Transverse colon (tissue), 4 donors: ENCODE measurements at regions of chr6 and their contacts with region 1.

Region 1: GRCh38 chr6:9412951-9413559 is 977.7 kb upstream of the SLC35B3 start:
- DNase-seq: peak; percentile 30
- H3K4me3 ChIP-seq: no peak overlapping the region
- H3K27ac ChIP-seq: no peak overlapping the region
- H3K4me1 ChIP-seq: no peaks in the 10 kb centered on the region
- H3K27me3 ChIP-seq: no peaks in the 10 kb centered on the region
- CTCF ChIP-seq: peak; percentile 20 to 45 (median 44)
- EP300 ChIP-seq: no peak
- POLR2A ChIP-seq: no peak

Region 2: DNA sequence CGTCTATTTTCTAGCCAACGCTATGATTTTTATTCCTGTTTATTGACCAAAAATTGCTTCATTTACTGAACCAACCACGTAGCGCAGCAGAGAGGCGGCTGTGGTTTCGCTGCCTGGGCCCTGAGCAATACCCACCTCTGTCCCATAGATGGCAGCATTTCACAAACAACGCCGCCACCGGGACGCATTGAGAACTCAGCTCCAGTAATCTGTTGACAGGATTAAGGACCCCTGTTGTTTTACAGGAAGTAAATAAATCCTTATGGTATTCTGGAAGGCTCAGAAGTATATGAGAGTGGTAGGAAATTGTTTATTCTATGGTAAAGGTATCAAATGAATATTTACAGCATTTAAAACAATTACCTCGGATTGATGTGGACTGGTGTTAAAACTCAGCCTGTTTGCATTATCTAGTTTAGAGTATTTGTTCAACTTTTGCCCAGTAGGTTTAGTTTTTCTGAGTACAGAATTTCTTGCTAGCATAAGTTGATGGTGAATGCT is 429.8 kb before region 1 on chr6:
- in situ Hi-C with region 1: loop called in 1 of 4 experiments (anchors 25 kb)
- intact Hi-C with region 1: no loop called
- DNase-seq: peak; percentile 63
- H3K4me3 ChIP-seq: peak overlapping the region in 1 of 4 donors; percentile 4
- H3K27ac ChIP-seq: no peak overlapping the region
- H3K4me1 ChIP-seq: peaks cover 0 to 8% (median 2%) of the 10 kb centered on the region in 4 donors
- H3K27me3 ChIP-seq: peaks cover 26% of the 10 kb centered on the region
- CTCF ChIP-seq: peak; percentile 83 to 95 (median 93)
- EP300 ChIP-seq: no peak
- POLR2A ChIP-seq: no peak

Region 3: DNA sequence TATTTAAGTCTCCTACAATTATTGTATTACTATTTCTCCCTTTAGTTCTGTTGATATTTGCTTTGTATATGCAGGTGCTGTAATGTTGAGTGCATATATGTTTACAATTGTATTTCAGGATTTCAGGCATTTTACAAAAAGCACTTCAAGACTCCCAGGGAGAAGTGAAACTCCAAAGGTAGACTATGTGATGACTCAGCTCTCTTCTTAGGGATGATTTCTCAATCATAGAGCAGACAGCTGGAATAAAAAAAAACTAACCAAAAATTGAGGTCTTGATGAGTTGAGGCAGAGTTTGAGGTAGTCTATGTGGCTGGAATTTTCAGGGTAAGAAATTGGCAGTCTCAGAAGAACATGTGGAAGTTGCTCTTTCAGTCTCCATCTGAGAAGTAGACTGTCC is 215.8 kb after region 1 on chr6:
- in situ Hi-C with region 1: no loop called
- intact Hi-C with region 1: no loop called
- DNase-seq: no peak
- H3K4me3 ChIP-seq: no peak overlapping the region
- H3K27ac ChIP-seq: no peak overlapping the region
- H3K4me1 ChIP-seq: no peaks in the 10 kb centered on the region
- H3K27me3 ChIP-seq: no peaks in the 10 kb centered on the region
- CTCF ChIP-seq: no peak
- EP300 ChIP-seq: no peak
- POLR2A ChIP-seq: no peak